ENCODE measurements at regions of chr21 and their contacts with region 1.

Region 1: GRCh38 chr21:37009740-37010341 is 3.3 kb downstream of the RIPPLY3 start:
- DNase-seq: peak; percentile 71
- H3K4me3 ChIP-seq: peak overlapping the region; percentile 32 to 41 (median 35)
- H3K27ac ChIP-seq: no peak overlapping the region
- H3K4me1 ChIP-seq: peaks cover 4% of the 10 kb centered on the region
- H3K27me3 ChIP-seq: no peaks in the 10 kb centered on the region
- CTCF ChIP-seq: peak; percentile 80 to 89

Region 2: DNA sequence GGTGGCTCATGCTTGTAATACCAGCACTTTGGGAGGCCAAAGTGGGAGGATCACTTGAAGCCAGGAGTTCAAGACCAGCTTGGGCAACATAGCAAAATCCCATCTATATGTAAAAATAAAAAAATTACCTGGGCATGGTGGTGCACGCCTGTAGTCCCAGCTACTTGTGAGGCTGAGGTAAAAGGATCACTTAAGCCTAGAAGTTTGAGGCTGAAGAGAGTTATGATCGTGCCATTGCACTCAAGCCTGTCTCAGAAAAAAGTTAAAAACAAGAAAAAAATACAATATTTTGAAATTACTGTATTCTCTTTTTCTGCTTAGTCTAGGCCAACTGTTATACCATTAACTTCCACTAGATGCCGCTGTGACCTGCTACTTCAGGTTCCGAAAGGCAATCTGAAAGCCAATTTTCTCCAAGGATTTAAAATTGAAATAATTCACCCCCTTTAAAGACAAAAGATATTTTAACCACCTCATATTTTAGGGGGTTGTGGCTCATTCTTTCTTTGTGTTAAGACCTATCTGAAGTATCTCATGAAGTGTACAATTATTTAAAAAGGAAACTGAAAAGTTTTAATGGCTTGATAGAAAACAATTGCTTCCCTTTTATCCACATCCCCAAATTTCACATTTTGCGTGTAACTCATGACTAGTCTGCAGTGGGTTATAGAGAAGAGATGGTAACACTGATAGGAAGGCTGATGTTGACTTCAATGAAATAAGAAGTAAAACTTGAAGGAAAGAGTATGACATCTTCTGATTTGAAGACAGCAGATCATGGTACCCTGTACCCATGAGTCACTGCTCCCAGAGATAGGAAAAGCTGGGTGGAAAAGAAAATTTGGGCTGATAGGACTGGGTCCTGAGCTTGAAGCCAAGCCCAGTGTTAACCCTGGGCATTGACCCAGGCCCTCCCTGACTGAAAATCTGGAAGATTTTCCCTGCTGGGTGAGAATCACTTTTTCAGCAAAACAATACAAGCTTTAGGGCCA is 505.5 kb before region 1 on chr21:
- CTCF ChIA-PET with region 1: no interaction called
- dilution Hi-C with region 1: no loop called
- in situ Hi-C with region 1: no loop called
- intact Hi-C with region 1: loop called (anchors 2 kb)
- DNase-seq: peak; percentile 11
- H3K4me3 ChIP-seq: no peak overlapping the region
- H3K27ac ChIP-seq: no peak overlapping the region
- H3K4me1 ChIP-seq: peaks cover 9% of the 10 kb centered on the region
- H3K27me3 ChIP-seq: no peaks in the 10 kb centered on the region
- CTCF ChIP-seq: peak; percentile 78 to 86

Region 3: GRCh38 chr21:36698981-36699891 is 310.6 kb before region 1 on chr21 and contains the start of gene SIM2:
- CTCF ChIA-PET with region 1: no interaction called
- dilution Hi-C with region 1: no loop called
- in situ Hi-C with region 1: no loop called
- intact Hi-C with region 1: no loop called
- DNase-seq: peak; percentile 43
- H3K4me3 ChIP-seq: peak within 1 kb of the TSS in 2 of 3 experiments; percentile 21 to 23
- H3K27ac ChIP-seq: no peak within 1 kb of the TSS
- H3K4me1 ChIP-seq: peaks cover 24% of the 10 kb centered on the region
- H3K27me3 ChIP-seq: peaks cover 93% of the 10 kb centered on the region
- CTCF ChIP-seq: no peak
- total RNA-seq, gene SIM2: under 0.01 TPM in 1 of 2 donors, not detected in the other

Region 4: DNA sequence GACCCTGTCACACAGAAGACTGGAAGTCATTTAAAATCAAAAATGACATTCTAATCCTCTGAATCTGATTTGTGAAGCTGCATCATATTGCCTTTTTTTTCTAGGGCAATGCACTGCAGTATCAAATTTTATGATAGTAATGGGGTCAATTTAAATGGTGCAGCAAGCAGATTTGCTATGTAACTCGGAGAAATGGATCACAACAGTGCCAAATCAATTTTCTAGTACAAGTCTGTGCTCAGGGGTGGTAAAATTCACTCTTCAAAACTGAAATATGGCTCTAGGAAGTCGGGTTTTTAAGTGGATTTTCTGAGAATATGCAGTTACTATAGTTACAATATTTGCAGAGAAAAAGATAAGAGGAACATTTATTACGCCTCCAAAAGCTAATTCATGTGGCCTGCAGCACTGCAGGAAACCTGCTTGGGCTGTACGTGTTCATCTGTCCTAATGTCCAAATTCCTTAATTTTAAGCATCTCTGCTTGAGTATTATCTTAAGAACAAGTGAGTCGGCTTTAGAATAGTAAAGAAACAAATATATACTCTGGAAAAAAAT is 74.9 kb before region 1 on chr21:
- CTCF ChIA-PET with region 1: no interaction called
- dilution Hi-C with region 1: no loop called
- in situ Hi-C with region 1: no loop called
- intact Hi-C with region 1: loop called (anchors 1 kb)
- DNase-seq: no peak
- H3K4me3 ChIP-seq: no peak overlapping the region
- H3K27ac ChIP-seq: no peak overlapping the region
- H3K4me1 ChIP-seq: peaks cover under 1% of the 10 kb centered on the region
- H3K27me3 ChIP-seq: no peaks in the 10 kb centered on the region
- CTCF ChIP-seq: no peak

Region 5: DNA sequence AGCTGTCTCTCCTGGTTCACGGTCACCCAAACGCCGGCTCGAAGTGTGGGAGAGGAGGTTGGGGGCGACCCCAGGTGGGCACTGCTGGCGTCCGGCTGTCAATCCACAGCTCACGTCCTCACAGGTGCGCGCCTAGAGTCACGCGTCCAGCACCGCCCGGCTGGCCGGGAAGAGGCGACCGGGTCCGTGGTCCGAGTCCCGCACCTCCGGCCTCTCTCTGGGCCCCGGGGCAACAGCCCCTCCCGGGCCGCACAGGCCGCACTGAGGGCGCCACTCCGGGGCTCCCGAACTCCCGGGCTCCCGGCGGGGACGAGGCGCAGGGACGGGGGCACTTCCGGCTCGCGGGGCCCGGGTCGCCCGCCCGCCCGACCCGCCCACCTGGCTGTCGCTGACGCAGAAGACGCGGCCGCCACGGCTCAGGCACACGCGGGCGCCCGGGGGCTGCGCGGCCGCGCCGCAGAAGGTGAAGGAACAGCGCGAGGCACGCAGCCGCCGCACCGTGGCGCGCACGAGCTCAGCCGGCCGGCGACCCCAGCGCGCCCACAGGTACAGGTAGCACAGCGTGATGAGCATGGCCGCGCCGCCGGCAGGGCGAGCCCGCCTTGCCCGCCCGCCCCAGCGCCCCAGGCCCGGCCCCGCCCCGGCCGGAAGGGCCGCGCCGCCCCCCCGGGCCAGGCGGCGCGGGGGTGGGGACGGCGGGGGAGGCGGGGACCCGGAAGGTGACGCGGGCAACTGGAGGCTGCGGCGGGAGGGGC is 43.6 kb before region 1 on chr21 and contains the start of gene HLCS:
- CTCF ChIA-PET with region 1: no interaction called
- dilution Hi-C with region 1: no loop called
- in situ Hi-C with region 1: no loop called
- intact Hi-C with region 1: loop called (anchors 2 kb)
- DNase-seq: peak; percentile 69
- H3K4me3 ChIP-seq: peak within 1 kb of the TSS; percentile 79 to 87 (median 87)
- H3K27ac ChIP-seq: peak within 1 kb of the TSS; percentile 43
- H3K4me1 ChIP-seq: peaks cover 9% of the 10 kb centered on the region
- H3K27me3 ChIP-seq: no peaks in the 10 kb centered on the region
- CTCF ChIP-seq: peak; percentile 21 to 36
- total RNA-seq, gene HLCS: 32.4 to 42.5 TPM

Region 6: DNA sequence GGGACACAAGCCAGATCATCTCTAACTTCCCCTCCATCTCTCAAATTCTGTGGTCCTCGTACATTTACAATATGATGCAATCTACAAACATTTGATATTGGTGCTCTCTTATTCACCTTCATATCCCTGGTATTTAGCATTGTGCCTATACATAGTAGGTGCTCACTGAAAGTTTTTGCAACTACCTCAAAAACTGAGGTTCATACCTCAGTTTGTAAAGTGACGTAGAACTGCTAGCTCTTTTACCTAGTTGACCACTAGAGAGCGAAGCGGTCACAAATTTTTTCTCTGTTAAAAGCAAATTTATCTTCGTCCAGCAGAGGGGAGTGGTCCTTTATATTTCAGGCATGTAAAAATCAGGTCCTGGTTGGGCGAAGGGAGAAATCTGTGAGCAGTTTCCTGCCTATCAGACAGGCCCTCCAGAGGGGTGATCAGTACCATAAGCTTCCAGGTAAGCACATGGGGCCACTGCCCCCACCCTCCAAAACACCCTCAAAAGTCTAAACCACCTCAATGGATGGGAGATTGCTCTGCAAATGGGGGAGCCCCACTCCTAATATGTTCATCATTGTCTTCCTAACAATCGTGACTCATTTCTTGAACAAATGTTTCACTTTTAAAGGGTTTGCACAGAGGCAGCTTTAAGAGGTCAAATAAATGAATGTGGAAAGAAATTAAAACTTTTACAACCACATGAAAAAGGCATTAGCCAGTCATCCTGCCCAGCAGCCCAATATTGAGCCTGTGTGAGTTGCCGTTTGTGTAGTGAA is 32.8 kb before region 1 on chr21:
- CTCF ChIA-PET with region 1: no interaction called
- dilution Hi-C with region 1: no loop called
- in situ Hi-C with region 1: no loop called
- intact Hi-C with region 1: loop called (anchors 1 kb)
- DNase-seq: peak; percentile 54
- H3K4me3 ChIP-seq: no peak overlapping the region
- H3K27ac ChIP-seq: no peak overlapping the region
- H3K4me1 ChIP-seq: peaks cover 17% of the 10 kb centered on the region
- H3K27me3 ChIP-seq: no peaks in the 10 kb centered on the region
- CTCF ChIP-seq: peak; percentile 47 to 65

Region 7: DNA sequence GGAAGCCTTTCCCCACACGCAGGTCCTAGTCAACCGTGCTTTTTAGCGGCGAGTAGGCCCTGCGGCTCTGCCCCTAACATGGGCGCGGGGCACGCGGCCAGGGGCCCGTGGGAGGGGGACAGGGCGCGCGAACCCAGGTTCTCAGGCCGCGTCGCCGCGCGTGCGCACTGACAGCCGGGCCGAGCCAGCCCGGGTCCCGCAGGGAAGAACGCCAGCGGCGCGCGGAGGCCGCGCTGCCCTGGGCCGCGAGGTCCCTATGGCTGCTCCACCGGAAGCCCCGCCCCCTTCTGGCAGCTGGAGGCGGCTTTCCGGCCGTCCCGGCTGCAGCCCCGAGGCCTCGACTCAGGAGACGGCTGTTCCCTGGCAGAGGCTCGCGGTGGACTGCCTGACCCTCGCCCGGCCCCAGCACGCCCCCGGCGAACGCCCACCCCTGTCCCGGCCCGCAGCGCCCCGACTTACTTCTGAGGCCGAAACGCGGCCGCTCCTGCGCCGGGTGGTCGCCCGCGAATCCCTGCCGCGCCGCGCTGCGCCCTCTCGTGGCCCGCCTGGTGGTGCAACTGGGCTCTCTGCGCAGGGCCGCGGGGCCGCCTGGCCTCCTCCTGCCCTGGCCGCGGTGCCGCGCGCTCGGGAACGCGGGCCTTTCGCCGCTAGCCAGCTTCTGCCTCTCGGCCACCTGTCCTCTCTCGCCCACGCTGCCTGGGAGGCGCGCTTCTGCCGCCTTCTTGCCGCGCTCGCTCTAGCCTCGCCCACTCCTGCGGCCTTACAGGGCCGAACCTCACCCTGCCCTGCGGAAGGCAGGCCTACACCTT is 19.9 kb before region 1 on chr21:
- CTCF ChIA-PET with region 1: no interaction called
- dilution Hi-C with region 1: no loop called
- in situ Hi-C with region 1: no loop called
- intact Hi-C with region 1: loop called (anchors 1 kb)
- DNase-seq: peak; percentile 87
- H3K4me3 ChIP-seq: peak overlapping the region; percentile 55 to 66 (median 65)
- H3K27ac ChIP-seq: peak overlapping the region; percentile 78
- H3K4me1 ChIP-seq: peaks cover 13% of the 10 kb centered on the region
- H3K27me3 ChIP-seq: no peaks in the 10 kb centered on the region
- CTCF ChIP-seq: peak; percentile 48 to 57

Region 8: DNA sequence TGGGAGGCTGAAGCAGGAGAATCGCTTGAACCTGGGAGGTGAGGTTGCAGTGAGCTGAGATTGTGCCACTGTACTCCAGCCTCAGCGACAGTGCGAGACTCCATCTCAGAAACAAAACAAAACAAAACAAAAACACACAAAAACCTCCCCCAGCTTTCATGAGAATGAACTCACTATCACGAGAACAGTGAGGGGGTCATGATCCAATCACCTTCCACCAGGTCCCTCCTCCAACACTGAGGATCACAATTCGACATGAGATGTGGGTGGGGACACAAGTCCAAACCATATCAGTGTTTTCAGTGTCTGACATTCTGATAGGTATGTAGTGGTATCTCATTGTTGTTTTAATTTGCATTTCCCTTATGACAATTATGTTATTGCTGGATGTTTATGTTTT is 325.2 kb after region 1 on chr21:
- CTCF ChIA-PET with region 1: no interaction called
- dilution Hi-C with region 1: no loop called
- in situ Hi-C with region 1: no loop called
- intact Hi-C with region 1: no loop called
- DNase-seq: no peak
- H3K4me3 ChIP-seq: no peak overlapping the region
- H3K27ac ChIP-seq: no peak overlapping the region
- H3K4me1 ChIP-seq: peaks cover 22% of the 10 kb centered on the region
- H3K27me3 ChIP-seq: no peaks in the 10 kb centered on the region
- CTCF ChIP-seq: no peak